ENCODE measurements at regions of chr1 and their contacts with region 1.

Region 1: DNA sequence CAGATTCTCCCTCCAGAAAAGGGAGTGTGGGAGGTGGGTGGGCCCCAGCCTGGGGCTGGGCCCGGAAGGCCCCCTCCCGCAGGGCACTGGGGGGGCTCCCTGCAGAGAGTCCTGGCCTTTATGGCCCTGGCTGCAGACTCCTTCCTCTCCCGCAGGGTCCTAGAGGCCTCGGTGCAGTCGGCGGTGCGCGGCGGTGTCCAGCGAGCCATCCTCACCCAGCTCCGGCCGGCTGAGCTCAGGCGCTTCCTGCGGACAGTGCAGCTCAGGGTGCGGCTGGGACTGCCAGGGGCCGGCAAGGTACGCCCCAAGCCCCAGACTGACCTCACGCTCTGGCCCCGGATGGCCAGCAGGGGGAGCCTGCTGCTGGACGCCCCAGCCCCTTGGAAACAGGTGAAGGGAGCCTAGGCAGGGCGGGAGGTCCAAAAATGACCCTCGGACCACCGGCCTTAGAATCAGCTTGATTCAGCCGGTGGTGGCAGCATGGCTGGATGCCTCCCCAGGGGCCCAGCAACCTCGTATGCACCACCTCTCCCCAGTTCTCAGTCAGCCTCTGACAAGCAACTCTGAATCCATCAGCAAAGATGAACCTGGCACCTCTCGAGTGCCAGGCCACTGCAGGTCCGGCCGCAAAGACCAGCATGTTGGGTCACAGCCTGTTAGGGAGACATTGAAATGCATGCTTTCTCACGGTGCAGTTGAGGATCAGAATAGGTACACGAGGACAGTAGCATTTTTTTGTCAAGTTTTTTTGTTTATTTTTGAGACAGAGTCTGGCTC is 20.6 kb downstream of the MTHFR start:
- DNase-seq: peak; percentile 84
- ATAC-seq: peak; percentile 57 to 67

Region 2: GRCh38 chr1:11735854-11736745 is 49.1 kb before region 1 on chr1 and contains the start of gene AGTRAP:
- intact Hi-C with region 1: loop called in 1 of 2 experiments (anchors 5 kb)
- DNase-seq: peak; percentile 99
- ATAC-seq: peak; percentile 92 to 93
- total RNA-seq, gene AGTRAP: 25.4 to 25.7 TPM

Measured in left cardiac atrium (tissue), 4 donors.